PC-3 (cell line): ENCODE measurements at regions of chr20 and their contacts with region 1.

Region 1: DNA sequence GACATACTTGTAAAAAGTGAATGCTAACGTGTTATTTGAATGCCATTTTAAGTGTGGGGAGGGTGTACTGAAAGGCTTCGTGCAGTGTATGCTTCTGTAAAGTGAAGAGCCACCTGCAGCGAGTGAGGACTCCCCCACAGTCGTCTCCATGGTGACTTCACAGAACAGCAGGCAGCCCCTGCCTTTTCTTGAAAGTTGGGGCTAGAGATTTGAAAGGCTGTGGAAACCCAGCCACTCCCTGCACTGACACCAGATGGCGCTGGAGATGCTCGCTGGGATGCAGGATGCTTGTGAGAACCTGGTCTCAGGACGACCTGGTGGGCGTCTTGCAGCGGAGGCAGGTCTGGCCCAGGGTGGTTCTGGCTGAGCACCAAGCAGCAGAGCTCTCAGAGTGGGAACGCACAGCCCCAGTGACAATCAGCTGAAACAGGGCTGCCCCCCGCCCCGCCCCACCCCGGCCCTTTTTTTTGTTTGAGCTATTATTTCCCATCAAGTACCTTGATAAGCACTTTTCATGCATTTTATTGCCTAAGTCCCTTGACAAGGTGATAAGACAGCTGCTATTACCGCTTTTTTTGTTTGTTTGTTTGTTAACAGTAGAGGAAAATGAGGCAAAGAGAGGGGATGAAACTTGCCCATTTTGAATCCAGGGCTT is 150.3 kb downstream of the SYCP2 start:
- DNase-seq: peak; percentile 80
- ATAC-seq: peak; percentile 57
- H3K4me3 ChIP-seq: no peak overlapping the region
- H3K27ac ChIP-seq: no peak overlapping the region
- H3K4me1 ChIP-seq: no peaks in the 10 kb centered on the region; the same call in 1 of the 2 replicates
- H3K27me3 ChIP-seq: no peaks in the 10 kb centered on the region
- CTCF ChIP-seq: peak; percentile 95

Region 2: DNA sequence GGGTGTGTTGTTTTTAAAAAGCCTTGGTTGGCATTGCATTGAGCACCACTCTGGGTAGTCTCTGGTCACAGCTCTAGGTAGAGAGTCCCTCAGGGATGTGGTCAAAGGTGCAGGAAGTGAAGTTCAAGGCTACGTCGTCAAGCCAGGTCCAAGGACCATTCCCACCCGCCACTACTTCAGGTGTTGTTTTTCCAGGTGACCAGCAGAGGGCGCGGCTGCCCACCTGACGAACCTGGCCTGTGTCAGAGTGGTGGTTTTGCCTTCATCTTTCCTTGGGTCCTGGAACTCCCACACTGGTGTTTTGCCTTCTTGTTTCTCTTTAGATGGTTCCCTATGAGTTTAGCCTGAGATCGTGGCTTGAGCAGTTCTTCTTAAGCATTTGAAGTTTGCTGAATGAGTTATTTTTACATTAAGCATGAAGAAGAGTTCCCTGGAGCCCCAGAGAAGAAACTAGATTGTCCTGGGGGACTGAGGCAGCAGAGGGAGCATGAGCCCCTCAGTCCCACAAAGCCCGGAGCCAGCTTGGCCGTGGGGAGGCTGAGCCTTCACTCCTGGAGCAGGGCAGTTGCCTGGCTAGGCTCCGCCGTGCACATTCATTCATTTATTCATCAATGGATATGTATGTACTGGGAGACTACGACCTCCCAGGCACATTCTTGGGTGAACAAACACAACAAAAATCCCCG is 184.3 kb before region 1 on chr20:
- CTCF ChIA-PET with region 1: interaction called, 12 read pairs
- POLR2A ChIA-PET with region 1: no interaction called
- intact Hi-C with region 1: no loop called
- DNase-seq: peak; percentile 50
- ATAC-seq: peak; percentile 89
- H3K4me3 ChIP-seq: no peak overlapping the region
- H3K27ac ChIP-seq: no peak overlapping the region
- H3K4me1 ChIP-seq: no peaks in the 10 kb centered on the region
- H3K27me3 ChIP-seq: peaks cover 71% of the 10 kb centered on the region
- CTCF ChIP-seq: peak; percentile 93

Region 3: GRCh38 chr20:59770270-59770669 is 12.8 kb before region 1 on chr20:
- CTCF ChIA-PET with region 1: interaction called, 14 read pairs
- POLR2A ChIA-PET with region 1: no interaction called
- intact Hi-C with region 1: no loop called
- DNase-seq: peak; percentile 71
- ATAC-seq: peak; percentile 53
- H3K4me3 ChIP-seq: no peak overlapping the region
- H3K27ac ChIP-seq: no peak overlapping the region
- H3K4me1 ChIP-seq: peaks cover 23% of the 10 kb centered on the region
- H3K27me3 ChIP-seq: no peaks in the 10 kb centered on the region
- CTCF ChIP-seq: peak; percentile 71

Region 4: GRCh38 chr20:59835448-59836395 is 52.6 kb after region 1 on chr20:
- CTCF ChIA-PET with region 1: interaction called, 5 read pairs
- POLR2A ChIA-PET with region 1: interaction called, 3 read pairs
- intact Hi-C with region 1: loop called (anchors 1 kb)
- DNase-seq: peak; percentile 91
- ATAC-seq: peak; percentile 64
- H3K4me3 ChIP-seq: peak overlapping the region; percentile 76
- H3K27ac ChIP-seq: peak overlapping the region; percentile 53
- H3K4me1 ChIP-seq: peaks cover 77% of the 10 kb centered on the region
- H3K27me3 ChIP-seq: no peaks in the 10 kb centered on the region
- CTCF ChIP-seq: no peak

Region 5: DNA sequence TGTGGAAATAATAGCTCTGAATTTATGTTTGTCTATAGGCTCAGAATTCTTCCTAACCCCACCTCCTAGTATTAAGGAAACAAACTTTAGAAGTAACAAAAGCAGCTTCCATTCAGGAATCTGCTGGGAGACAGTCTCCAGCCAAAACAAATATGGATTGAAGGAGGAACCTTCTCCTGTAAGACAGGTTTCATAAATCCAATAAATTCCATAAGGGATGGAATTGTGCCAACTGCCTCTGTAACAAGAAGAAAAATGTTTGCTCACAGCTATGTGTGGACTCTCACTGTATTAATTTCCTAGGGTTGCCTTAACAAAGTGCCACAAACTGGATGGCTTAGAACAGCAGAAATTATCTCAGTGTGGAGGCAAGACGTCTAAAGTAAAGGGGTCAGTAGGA is 142.8 kb after region 1 on chr20:
- CTCF ChIA-PET with region 1: no interaction called
- POLR2A ChIA-PET with region 1: no interaction called
- intact Hi-C with region 1: loop called (anchors 5 kb)
- DNase-seq: peak; percentile 97
- ATAC-seq: peak; percentile 94
- H3K4me3 ChIP-seq: peak overlapping the region; percentile 1; the same call in 1 of the 2 replicates
- H3K27ac ChIP-seq: peak overlapping the region; percentile 23
- H3K4me1 ChIP-seq: peaks cover 32% of the 10 kb centered on the region
- H3K27me3 ChIP-seq: no peaks in the 10 kb centered on the region
- CTCF ChIP-seq: no peak

Region 6: GRCh38 chr20:59933849-59934596 is 150.9 kb after region 1 on chr20:
- CTCF ChIA-PET with region 1: interaction called, 10 read pairs
- POLR2A ChIA-PET with region 1: no interaction called
- intact Hi-C with region 1: loop called (anchors 5 kb)
- DNase-seq: peak; percentile 78
- ATAC-seq: peak; percentile 89
- H3K4me3 ChIP-seq: peak overlapping the region; percentile 69
- H3K27ac ChIP-seq: no peak overlapping the region
- H3K4me1 ChIP-seq: peaks cover 22% of the 10 kb centered on the region
- H3K27me3 ChIP-seq: no peaks in the 10 kb centered on the region
- CTCF ChIP-seq: peak; percentile 93